PC-9 (cell line): ENCODE measurements at regions of chr6 and their contacts with region 1.

Region 1: GRCh38 chr6:147081140-147081539 is 123.1 kb upstream of the STXBP5 start:
- DNase-seq: peak; percentile 16 to 91
- H3K4me3 ChIP-seq: no peak overlapping the region
- H3K27ac ChIP-seq: peak overlapping the region; percentile 9
- H3K4me1 ChIP-seq: peaks cover 49% of the 10 kb centered on the region
- H3K27me3 ChIP-seq: no peaks in the 10 kb centered on the region
- CTCF ChIP-seq: no peak

Region 2: DNA sequence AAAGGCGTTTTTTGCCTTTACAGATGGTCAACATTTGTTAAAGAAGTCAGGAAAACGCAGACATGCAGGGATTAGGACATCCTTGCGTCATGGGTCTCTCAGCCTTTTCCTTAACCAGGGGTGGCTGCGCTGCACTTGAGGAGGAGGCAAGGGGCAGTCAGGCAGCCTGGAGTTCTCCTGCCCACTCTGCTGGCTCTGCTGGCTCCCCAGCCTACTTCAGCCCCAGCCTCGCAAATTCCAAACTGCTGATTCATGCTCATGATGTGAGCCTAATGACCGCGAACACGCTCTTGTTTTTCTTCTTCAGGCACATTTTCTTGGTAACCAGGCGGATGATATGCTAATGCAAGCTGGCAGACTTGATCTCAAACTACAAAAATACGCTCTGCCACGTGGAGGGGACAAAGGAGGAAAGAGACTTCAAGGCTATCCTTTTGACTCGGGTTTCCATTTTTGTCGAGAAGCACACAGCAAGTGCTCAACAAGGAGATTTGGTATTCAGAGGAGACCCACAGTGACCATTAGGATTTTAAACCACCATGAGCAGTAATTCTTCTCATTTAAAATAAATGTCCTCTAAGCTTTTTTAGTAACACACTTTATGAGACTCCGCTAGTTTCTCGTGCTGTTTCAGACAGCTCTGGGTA is 167.2 kb before region 1 on chr6:
- CTCF ChIA-PET with region 1: no interaction called
- POLR2A ChIA-PET with region 1: no interaction called
- intact Hi-C with region 1: loop called (anchors 1 kb)
- DNase-seq: peak; percentile 80 to 93
- H3K4me3 ChIP-seq: peak overlapping the region; percentile 34; the same call in 1 of the 2 replicates
- H3K27ac ChIP-seq: peak overlapping the region; percentile 95
- H3K4me1 ChIP-seq: peaks cover 45% of the 10 kb centered on the region
- H3K27me3 ChIP-seq: no peaks in the 10 kb centered on the region
- CTCF ChIP-seq: no peak

Region 3: GRCh38 chr6:146972526-146972925 is 108.6 kb before region 1 on chr6:
- CTCF ChIA-PET with region 1: no interaction called
- POLR2A ChIA-PET with region 1: no interaction called
- intact Hi-C with region 1: no loop called
- DNase-seq: no peak
- H3K4me3 ChIP-seq: no peak overlapping the region
- H3K27ac ChIP-seq: no peak overlapping the region
- H3K4me1 ChIP-seq: peaks cover 13% of the 10 kb centered on the region
- H3K27me3 ChIP-seq: no peaks in the 10 kb centered on the region
- CTCF ChIP-seq: no peak

Region 4: GRCh38 chr6:147135211-147135681 is 54.1 kb after region 1 on chr6:
- CTCF ChIA-PET with region 1: no interaction called
- POLR2A ChIA-PET with region 1: no interaction called
- intact Hi-C with region 1: no loop called
- DNase-seq: no peak
- H3K4me3 ChIP-seq: no peak overlapping the region
- H3K27ac ChIP-seq: no peak overlapping the region
- H3K4me1 ChIP-seq: peaks cover 13% of the 10 kb centered on the region
- H3K27me3 ChIP-seq: no peaks in the 10 kb centered on the region
- CTCF ChIP-seq: no peak

Region 5: GRCh38 chr6:147161974-147162495 is 80.9 kb after region 1 on chr6:
- CTCF ChIA-PET with region 1: interaction called, 13 read pairs
- POLR2A ChIA-PET with region 1: no interaction called
- intact Hi-C with region 1: no loop called
- DNase-seq: no peak
- H3K4me3 ChIP-seq: no peak overlapping the region
- H3K27ac ChIP-seq: no peak overlapping the region
- H3K4me1 ChIP-seq: no peaks in the 10 kb centered on the region
- H3K27me3 ChIP-seq: no peaks in the 10 kb centered on the region
- CTCF ChIP-seq: no peak

Region 6: GRCh38 chr6:147202516-147203312 is 121.6 kb after region 1 on chr6:
- CTCF ChIA-PET with region 1: no interaction called
- POLR2A ChIA-PET with region 1: no interaction called
- intact Hi-C with region 1: loop called (anchors 2 kb)
- DNase-seq: peak; percentile 63 to 86
- H3K4me3 ChIP-seq: peak overlapping the region; percentile 77
- H3K27ac ChIP-seq: no peak overlapping the region
- H3K4me1 ChIP-seq: peaks cover 29% of the 10 kb centered on the region
- H3K27me3 ChIP-seq: no peaks in the 10 kb centered on the region
- CTCF ChIP-seq: no peak

Region 7: DNA sequence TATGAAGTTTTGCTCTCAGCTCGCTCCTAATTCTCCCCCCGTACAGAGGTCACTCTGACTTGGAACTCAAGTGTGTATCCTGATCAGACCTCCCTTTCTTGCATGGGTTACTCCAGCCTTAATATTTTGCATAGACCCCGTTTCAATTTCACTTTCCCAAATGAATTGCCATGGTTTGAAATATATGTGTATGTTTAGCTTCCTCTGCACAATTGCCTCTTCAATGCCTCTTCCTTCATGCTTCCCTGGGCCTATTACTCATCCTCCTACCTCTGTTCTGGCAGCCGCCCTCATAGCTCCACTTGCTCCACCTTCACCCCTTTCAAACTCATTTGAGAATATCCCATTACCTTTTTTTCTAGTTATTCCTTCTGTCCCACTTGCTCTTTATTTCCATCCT is 337.4 kb after region 1 on chr6:
- CTCF ChIA-PET with region 1: no interaction called
- POLR2A ChIA-PET with region 1: no interaction called
- intact Hi-C with region 1: no loop called
- DNase-seq: no peak
- H3K4me3 ChIP-seq: no peak overlapping the region
- H3K27ac ChIP-seq: no peak overlapping the region
- H3K4me1 ChIP-seq: no peaks in the 10 kb centered on the region
- H3K27me3 ChIP-seq: no peaks in the 10 kb centered on the region
- CTCF ChIP-seq: no peak

Region 8: GRCh38 chr6:148177589-148178233 is 1096.6 kb after region 1 on chr6:
- CTCF ChIA-PET with region 1: no interaction called
- POLR2A ChIA-PET with region 1: interaction called, 52 read pairs
- intact Hi-C with region 1: no loop called
- DNase-seq: no peak
- H3K4me3 ChIP-seq: no peak overlapping the region
- H3K27ac ChIP-seq: no peak overlapping the region
- H3K4me1 ChIP-seq: no peaks in the 10 kb centered on the region
- H3K27me3 ChIP-seq: no peaks in the 10 kb centered on the region
- CTCF ChIP-seq: peak; percentile 71